ENCODE measurements at regions of chr20 and their contacts with region 1.

Region 1: GRCh38 chr20:50790651-50791277 is 4.1 kb upstream of the BCAS4 start:
- DNase-seq: peak; percentile 72 to 78 (median 77)
- H3K4me3 ChIP-seq: peak overlapping the region in 2 of 7 experiments; percentile 11 to 38
- H3K27ac ChIP-seq: peak overlapping the region in 1 of 2 experiments; percentile 81
- H3K4me1 ChIP-seq: peaks cover 0 to 23% (median 16%) of the 10 kb centered on the region in 4 experiments
- H3K27me3 ChIP-seq: no peaks in the 10 kb centered on the region

Region 2: DNA sequence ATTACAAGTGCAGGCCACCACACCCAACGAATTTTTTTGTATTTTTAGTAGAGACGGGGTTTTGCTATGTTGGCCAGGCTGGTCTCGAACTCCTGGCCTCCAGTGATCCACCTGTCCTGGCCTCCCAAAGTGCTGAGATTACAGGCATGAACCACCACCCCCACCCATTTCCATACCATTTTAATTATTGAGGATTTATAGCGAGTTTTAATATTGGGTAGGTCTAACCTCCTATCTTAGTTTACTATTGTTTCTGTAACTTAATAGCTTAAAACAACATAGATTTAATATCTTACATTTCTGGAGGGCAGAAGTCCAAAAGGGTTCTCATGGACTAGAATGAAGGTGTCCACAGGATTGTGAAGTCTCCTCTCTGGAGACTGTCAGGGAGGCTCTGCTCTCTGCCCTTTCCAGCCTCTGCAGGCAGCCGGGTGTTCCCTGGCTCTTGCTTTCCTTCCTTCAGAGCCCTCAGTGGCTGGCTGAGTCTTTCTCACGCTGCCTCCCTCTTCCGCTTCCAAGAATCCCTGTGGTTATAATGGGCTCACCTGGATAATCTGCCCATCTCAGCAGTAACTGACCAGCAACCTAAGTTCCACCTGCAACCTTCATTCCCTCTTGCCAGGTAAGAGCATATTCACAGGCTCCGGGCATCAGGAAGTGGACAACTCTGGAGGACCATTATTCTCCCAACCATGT is 14.5 kb before region 1 on chr20:
- CTCF ChIA-PET with region 1: interaction called, 21 read pairs
- POLR2A ChIA-PET with region 1: no interaction called
- DNase-seq: no peak
- H3K4me3 ChIP-seq: no peak overlapping the region
- H3K27ac ChIP-seq: no peak overlapping the region
- H3K4me1 ChIP-seq: no peaks in the 10 kb centered on the region
- H3K27me3 ChIP-seq: no peaks in the 10 kb centered on the region

Region 3: DNA sequence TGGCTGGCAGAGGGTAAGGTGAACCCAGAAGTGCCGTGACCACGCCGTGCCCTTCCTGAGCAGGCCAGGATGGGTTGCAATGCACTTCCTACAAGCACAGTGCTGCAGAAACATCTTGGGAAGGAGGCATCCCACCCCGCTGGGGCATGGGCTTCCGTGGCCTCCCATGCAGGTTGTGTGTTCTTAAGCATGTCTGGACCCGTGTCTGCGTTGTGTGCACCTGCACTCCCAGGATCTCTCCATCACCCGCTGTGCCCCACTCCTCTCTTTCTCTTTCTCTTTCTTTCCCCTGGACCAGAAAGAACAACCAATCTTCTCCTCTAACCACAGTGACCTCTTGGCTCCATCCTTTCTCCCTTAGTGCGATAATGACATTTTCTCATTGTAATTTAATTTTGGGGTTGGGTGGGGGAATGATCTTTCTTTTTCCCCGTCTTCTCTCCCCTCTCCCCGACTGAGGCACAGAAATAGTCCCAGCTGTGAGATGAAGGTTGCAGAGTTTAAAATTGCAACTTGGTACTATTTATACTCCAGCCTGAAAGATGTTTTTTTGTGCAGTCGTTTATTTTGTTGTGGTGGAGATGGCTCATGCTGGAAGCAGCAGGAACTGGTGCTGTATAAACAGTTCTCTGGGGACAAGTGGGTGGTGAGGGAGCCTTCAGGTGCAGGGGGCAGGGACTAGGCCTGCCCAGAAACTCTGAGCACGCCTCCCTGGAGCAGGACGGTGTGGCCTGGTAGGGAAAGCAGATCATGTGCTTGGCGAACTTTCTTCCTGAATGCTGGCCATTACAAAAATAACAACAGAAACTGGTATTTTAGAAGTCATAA is 24.6 kb after region 1 on chr20:
- CTCF ChIA-PET with region 1: interaction called, 28 read pairs
- POLR2A ChIA-PET with region 1: interaction called, 4 read pairs
- DNase-seq: peak in 2 of 3 donors; percentile 34 to 48
- H3K4me3 ChIP-seq: peak overlapping the region in 3 of 7 experiments; percentile 7 to 59 (median 22)
- H3K27ac ChIP-seq: peak overlapping the region in 1 of 2 experiments; percentile 38
- H3K4me1 ChIP-seq: peaks cover 0 to 45% (median 28%) of the 10 kb centered on the region in 4 experiments
- H3K27me3 ChIP-seq: no peaks in the 10 kb centered on the region

Region 4: DNA sequence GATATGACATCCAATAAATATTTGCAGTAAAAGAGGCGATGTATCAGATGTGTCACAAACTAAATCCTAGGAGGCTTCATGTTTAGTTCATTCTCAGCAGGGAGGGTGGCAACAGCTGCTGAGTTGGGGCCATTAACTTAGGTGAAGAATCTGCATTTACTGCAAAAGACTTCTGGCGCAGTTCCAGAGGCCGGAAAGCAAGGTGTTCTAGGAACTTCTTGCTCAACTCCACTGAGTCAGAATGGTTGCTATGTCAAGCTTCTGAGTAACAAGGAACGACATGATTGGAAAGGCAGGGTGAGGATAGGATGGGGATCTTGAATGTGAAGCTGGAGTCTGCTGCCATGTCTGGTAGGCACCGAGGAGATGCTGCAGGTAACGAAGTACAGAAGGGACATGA is 128.8 kb after region 1 on chr20:
- CTCF ChIA-PET with region 1: interaction called, 14 read pairs
- POLR2A ChIA-PET with region 1: no interaction called
- DNase-seq: no peak
- H3K4me3 ChIP-seq: no peak overlapping the region
- H3K27ac ChIP-seq: no peak overlapping the region
- H3K4me1 ChIP-seq: peaks cover 5 to 39% (median 13%) of the 10 kb centered on the region in 4 experiments
- H3K27me3 ChIP-seq: no peaks in the 10 kb centered on the region

Region 5: DNA sequence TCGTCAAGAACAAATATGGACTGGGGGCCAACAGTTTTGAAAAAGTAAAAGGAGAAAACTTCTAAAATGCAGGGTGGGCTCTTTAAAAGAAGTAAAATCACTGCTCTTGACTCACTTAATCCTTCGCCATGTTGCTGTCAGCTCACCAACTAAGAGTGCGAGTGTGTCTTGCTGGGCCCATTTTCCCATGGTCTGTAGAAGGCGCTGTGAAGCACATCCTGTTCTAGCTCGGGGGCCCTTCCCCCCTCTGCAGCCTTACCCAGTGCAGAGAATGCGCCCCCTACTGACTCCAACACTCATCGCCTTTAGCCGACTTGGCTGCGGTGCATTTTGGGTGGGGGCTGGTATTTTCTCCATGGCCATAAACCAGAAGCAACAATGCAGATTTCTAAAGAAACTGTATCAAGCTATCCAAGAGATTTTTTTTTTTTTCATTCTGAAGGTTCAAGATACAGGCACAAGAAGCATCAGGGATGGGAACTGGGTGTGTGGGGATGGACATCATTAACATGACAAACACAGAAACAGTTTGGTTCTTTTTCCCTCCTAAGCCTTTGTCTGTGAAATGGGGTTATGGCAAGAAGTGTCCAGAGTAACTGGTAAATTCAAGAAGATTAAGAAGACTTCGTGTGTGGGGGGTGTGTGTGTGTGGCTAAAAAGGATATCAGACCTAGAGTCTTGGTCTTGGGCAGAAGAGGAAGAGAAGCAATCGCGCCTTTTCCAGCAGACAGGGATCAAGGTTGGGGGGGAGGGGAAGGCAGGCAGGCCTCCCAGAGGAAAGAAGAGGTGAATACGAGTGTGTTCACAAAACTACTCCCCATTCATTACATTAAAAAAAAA is 138.8 kb after region 1 on chr20:
- CTCF ChIA-PET with region 1: interaction called, 23 read pairs
- POLR2A ChIA-PET with region 1: interaction called, 15 read pairs
- DNase-seq: peak; percentile 98 to 99 (median 98)
- H3K4me3 ChIP-seq: peak overlapping the region; percentile 26 to 93 (median 88)
- H3K27ac ChIP-seq: peak overlapping the region; percentile 64 to 79
- H3K4me1 ChIP-seq: peaks cover 18 to 37% (median 27%) of the 10 kb centered on the region in 4 experiments
- H3K27me3 ChIP-seq: no peaks in the 10 kb centered on the region

Region 6: DNA sequence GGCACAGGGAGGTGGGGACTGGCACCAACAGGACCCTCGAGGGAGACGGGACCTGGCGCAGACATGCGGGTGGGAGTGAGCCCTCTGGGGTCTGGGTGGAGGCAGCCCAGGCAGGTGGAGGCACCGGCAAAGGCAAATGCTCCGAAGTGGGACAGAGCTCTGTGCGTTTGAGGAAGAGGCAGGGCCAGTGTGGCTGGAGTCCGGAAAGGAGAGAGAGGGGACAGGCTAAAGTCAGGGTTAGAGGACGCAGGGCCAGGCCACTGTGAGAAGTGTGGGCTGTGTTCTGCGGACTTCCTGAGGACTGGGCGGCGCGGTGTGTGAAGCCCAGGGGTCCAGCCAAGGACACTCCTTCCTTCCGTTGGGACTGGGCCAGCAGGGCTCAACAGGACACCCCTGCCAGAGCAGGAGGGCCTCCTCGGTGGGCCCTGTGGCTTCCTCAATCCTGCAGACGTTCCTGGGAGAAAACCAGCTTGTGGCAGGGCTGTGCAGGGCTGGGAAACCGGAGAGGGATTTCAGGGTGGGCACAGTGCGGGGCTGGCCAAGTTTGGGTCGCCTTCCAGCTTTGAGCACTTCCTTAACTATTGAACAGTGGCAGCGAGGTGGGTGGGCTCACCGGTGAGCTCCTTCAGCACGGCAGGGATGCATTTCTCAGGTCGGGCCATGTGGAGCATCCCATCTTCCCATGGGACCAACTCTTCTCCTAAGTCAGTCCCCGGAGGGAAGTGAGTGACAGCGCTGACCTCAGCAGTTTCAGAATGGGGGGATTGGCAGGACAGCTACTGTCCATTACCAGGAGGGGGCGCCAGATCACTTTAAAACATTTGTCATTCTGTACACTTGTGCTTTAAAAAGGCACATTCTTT is 190.3 kb after region 1 on chr20:
- CTCF ChIA-PET with region 1: interaction called, 12 read pairs
- POLR2A ChIA-PET with region 1: no interaction called
- DNase-seq: peak; percentile 66 to 77 (median 75)
- H3K4me3 ChIP-seq: peak overlapping the region in 1 of 7 experiments; percentile 57
- H3K27ac ChIP-seq: no peak overlapping the region
- H3K4me1 ChIP-seq: peaks cover 0 to 4% (median 0%) of the 10 kb centered on the region in 4 experiments
- H3K27me3 ChIP-seq: peaks cover 0 to 15% (median 7%) of the 10 kb centered on the region in 5 experiments